Naive thymus-derived CD4-positive, alpha-beta T cell (primary cell): ENCODE measurements at regions of chr12 and their contacts with region 1.

Region 1: DNA sequence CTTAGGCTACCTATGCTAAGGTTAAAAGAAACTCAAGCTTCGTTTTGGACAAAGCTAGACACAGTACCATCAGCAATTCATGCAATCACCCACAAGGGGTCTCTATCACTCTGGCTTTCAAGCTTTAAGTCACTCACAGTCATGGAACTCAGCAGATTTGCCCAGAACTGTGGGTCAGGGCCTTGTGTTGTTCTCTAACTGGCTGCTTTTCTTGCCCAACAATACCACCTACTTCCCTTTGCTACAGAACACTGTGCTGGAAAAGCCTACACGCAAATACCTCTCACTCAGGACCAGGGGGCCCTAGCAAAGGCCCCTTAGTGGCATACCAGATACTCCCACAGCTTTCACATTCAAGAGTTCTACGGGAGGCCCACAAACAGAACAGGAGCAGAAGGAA is 9.1 kb downstream of the NEMP1 start:
- DNase-seq: peak in 8 of 9 donors; percentile 42 to 79 (median 72)
- ATAC-seq: peak; percentile 100
- H3K4me3 ChIP-seq: no peak overlapping the region
- H3K4me3 Mint-ChIP-seq: peak overlapping the region in 8 of 10 donors; percentile 4 to 33 (median 20)
- H3K27ac ChIP-seq: peak overlapping the region; percentile 60
- H3K27ac Mint-ChIP-seq: peak overlapping the region; percentile 70 to 89 (median 83)
- H3K4me1 ChIP-seq: peaks cover 4 to 15% of the 10 kb centered on the region in 2 donors
- H3K4me1 Mint-ChIP-seq: peaks cover 13 to 50% (median 30%) of the 10 kb centered on the region in 7 donors
- H3K27me3 ChIP-seq: no peaks in the 10 kb centered on the region
- H3K27me3 Mint-ChIP-seq: no peaks in the 10 kb centered on the region

Region 2: DNA sequence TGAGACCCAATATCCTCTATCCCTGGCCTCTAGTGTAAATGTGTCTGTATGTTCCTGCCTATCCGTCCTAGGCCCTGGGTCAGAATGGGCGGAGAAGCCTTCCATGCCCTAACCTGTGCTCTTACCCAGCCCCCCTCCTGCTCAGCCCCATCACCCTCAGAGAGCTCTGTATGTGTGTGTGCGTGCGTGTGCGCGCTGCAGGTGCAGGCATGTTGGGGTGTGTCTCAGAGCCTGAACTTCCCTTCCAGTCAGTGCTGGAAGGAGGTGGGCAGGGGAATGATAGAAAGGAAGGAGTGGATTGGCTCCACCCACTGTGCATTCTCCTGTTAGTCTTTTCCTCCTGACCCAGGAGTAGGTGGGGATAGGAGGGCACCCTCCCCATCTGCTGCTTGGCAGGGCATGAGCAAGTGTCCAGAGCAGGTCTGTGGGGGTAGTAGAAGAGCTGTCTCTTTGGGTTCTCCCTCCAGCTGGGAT is 26.6 kb after region 1 on chr12:
- CTCF ChIA-PET with region 1: interaction called, 44 read pairs
- POLR2A ChIA-PET with region 1: interaction called, 28 read pairs
- intact Hi-C with region 1: loop called (anchors 1 kb)
- DNase-seq: no peak
- ATAC-seq: no peak
- H3K4me3 ChIP-seq: no peak overlapping the region
- H3K4me3 Mint-ChIP-seq: peak overlapping the region in 1 of 10 donors; percentile 11
- H3K27ac ChIP-seq: peak overlapping the region; percentile 83
- H3K27ac Mint-ChIP-seq: peak overlapping the region in 8 of 9 donors; percentile 47 to 94 (median 64)
- H3K4me1 ChIP-seq: peaks cover 7 to 32% of the 10 kb centered on the region in 2 donors
- H3K4me1 Mint-ChIP-seq: peaks cover 33 to 62% (median 51%) of the 10 kb centered on the region in 7 donors
- H3K27me3 ChIP-seq: no peaks in the 10 kb centered on the region
- H3K27me3 Mint-ChIP-seq: no peaks in the 10 kb centered on the region

Region 3: DNA sequence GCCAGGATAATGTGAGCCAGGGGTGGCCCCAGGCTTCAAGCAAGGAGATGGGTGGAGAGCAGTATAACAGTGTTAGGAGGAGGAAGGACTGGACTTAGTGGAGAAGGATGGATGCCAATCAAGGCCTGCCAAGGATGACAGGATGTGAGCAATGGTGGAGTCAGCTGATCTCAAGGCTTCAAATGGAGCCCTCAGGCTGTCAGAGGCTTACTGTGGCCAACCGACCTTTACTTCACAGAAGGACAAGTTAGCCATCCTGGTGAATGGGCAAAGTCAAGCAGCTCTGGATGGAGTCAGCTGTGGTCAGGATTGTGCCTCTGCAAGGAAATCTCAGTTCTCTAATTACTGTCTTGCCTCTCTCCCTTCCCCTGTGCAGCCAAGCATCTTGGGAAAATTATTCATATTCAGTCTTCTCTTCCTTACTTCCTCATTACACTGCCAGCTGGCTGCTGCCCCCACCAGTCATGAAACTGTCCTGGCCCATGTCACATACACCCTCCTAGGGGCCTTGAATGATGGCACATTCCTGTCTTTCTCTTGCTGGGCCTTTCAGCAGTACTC is 49.3 kb after region 1 on chr12:
- CTCF ChIA-PET with region 1: interaction called, 12 read pairs
- POLR2A ChIA-PET with region 1: interaction called, 4 read pairs
- intact Hi-C with region 1: no loop called
- DNase-seq: no peak
- ATAC-seq: peak; percentile 77
- H3K4me3 ChIP-seq: no peak overlapping the region
- H3K4me3 Mint-ChIP-seq: no peak overlapping the region
- H3K27ac ChIP-seq: no peak overlapping the region
- H3K27ac Mint-ChIP-seq: no peak overlapping the region
- H3K4me1 ChIP-seq: no peaks in the 10 kb centered on the region
- H3K4me1 Mint-ChIP-seq: peaks cover 0 to 6% (median 0%) of the 10 kb centered on the region in 7 donors
- H3K27me3 ChIP-seq: no peaks in the 10 kb centered on the region
- H3K27me3 Mint-ChIP-seq: peaks cover 0 to 11% (median 0%) of the 10 kb centered on the region in 5 donors

Region 4: DNA sequence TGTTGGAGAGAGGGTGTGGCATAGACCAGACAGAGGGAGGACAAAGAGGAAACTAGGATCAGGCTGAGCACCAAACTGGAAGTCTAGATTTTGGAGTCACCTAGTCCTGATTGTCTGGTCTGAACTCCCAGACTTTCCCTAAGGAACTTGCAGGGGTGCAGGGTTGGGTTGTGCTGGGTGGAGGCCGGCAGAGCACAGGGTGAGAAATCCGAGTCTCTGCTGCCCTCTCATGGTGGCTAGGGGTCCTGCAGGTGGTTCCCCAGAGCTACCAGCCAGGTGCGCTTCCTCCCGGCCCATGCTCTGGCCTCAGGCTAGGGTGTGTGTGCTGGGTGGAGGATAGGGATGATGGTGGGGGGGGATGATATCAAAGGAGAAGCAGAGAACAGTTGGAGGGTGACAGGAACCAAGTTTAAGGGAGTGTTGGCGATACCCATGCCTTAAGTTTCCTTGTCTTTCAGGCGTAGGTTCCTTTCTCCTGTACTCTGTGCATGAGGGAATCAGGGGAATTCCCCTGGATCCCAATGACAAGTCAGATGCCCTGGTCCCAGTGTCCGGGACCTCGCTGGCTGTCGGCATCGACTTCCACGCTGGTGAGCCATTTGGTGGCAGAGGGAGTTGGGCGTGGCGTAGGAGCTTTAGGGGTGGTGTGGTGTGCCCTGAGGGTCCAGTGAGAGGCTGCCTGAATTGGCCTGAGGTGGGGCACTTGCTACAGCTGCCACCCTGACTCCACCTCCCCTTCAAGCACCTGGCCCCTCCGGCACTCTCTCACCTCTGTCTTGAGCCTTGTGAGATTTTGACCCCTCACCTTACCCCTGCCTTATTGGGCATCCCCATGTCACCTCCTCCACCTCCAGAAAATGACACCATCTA is 113.6 kb after region 1 on chr12:
- CTCF ChIA-PET with region 1: interaction called, 7 read pairs
- POLR2A ChIA-PET with region 1: interaction called, 3 read pairs
- intact Hi-C with region 1: loop called (anchors 1 kb)
- DNase-seq: peak; percentile 54 to 85 (median 73)
- ATAC-seq: peak; percentile 95
- H3K4me3 ChIP-seq: no peak overlapping the region
- H3K4me3 Mint-ChIP-seq: no peak overlapping the region
- H3K27ac ChIP-seq: no peak overlapping the region
- H3K27ac Mint-ChIP-seq: peak overlapping the region in 1 of 9 donors; percentile 24
- H3K4me1 ChIP-seq: no peaks in the 10 kb centered on the region
- H3K4me1 Mint-ChIP-seq: peaks cover 2 to 10% (median 6%) of the 10 kb centered on the region in 7 donors
- H3K27me3 ChIP-seq: no peaks in the 10 kb centered on the region
- H3K27me3 Mint-ChIP-seq: peaks cover 0 to 2% (median 0%) of the 10 kb centered on the region in 5 donors